ENCODE measurements at regions of chr17 and their contacts with region 1.

Region 1: GRCh38 chr17:77957857-77958715 is at the start of gene TNRC6C:
- DNase-seq: peak; percentile 100
- H3K4me3 ChIP-seq: peak within 1 kb of the TSS; percentile 93
- H3K4me3 Mint-ChIP-seq: peak within 1 kb of the TSS; percentile 97
- H3K27ac Mint-ChIP-seq: peak within 1 kb of the TSS; percentile 85
- H3K4me1 ChIP-seq: peaks cover 3% of the 10 kb centered on the region
- H3K4me1 Mint-ChIP-seq: peaks cover 6% of the 10 kb centered on the region
- H3K27me3 ChIP-seq: no peaks in the 10 kb centered on the region
- H3K27me3 Mint-ChIP-seq: peaks cover 31% of the 10 kb centered on the region
- CTCF ChIP-seq: peak in 1 of 2 experiments; percentile 47
- total RNA-seq, gene TNRC6C: 17.9 and 19.5 TPM in 2 replicates

Region 2: GRCh38 chr17:77783991-77784820 is 173.9 kb before region 1 on chr17:
- CTCF ChIA-PET with region 1: interaction called, 5 read pairs
- POLR2A ChIA-PET with region 1: interaction called, 11 read pairs
- intact Hi-C with region 1: no loop called
- DNase-seq: no peak
- H3K4me3 ChIP-seq: no peak overlapping the region
- H3K4me3 Mint-ChIP-seq: no peak overlapping the region
- H3K27ac Mint-ChIP-seq: no peak overlapping the region
- H3K4me1 ChIP-seq: no peaks in the 10 kb centered on the region
- H3K4me1 Mint-ChIP-seq: no peaks in the 10 kb centered on the region
- H3K27me3 ChIP-seq: no peaks in the 10 kb centered on the region; the same call in none of the 2 replicates
- H3K27me3 Mint-ChIP-seq: peaks cover 37% of the 10 kb centered on the region
- CTCF ChIP-seq: no peak

Region 3: DNA sequence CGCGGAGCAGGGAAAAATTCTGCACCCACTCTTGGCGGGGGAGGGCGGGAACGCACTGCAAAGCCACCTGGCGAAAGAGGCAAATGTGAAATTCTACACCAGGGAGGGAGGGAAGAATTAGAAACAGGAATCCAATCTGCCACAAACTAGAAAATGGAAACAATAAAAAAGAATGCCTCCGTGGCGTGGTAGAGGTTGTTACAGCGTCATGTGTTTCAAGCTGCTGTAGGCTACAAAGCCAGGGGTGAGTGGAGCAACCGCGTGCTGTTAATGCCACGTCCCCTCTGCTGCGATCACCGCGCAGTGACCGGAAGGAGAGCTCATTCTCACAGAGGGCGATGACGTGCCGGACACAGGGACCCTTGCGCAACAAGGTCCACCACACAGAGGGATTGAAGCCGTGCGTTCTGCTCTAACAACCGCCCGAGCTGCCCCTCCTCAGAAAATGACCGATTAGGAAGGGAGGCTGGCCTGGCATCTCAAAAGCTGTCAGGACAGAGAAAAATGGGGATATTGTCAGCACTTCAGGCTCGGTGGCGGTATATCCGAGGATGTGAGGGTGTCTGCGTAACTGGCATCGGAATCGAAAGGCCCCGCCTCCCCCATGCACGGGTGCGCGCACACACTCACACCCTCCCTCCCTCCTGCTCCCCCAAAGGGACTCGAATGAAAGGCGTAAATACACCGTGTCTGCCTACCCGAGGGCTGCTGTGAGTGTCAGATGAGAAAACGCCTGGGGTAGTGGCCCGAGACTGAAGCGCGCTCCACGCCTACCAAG is 70.4 kb before region 1 on chr17:
- CTCF ChIA-PET with region 1: no interaction called
- POLR2A ChIA-PET with region 1: interaction called, 19 read pairs
- intact Hi-C with region 1: no loop called
- DNase-seq: peak; percentile 66 to 69
- H3K4me3 ChIP-seq: peak overlapping the region; percentile 38
- H3K4me3 Mint-ChIP-seq: peak overlapping the region; percentile 78
- H3K27ac Mint-ChIP-seq: peak overlapping the region; percentile 16
- H3K4me1 ChIP-seq: peaks cover 14% of the 10 kb centered on the region; the same call in 1 of the 2 replicates
- H3K4me1 Mint-ChIP-seq: peaks cover 21% of the 10 kb centered on the region
- H3K27me3 ChIP-seq: peaks cover 4% of the 10 kb centered on the region
- H3K27me3 Mint-ChIP-seq: peaks cover 37% of the 10 kb centered on the region
- CTCF ChIP-seq: no peak

Region 4: GRCh38 chr17:78013683-78014467 is 55.8 kb after region 1 on chr17:
- CTCF ChIA-PET with region 1: interaction called, 9 read pairs
- POLR2A ChIA-PET with region 1: interaction called, 13 read pairs
- intact Hi-C with region 1: no loop called
- DNase-seq: peak; percentile 46 to 59
- H3K4me3 ChIP-seq: no peak overlapping the region
- H3K4me3 Mint-ChIP-seq: no peak overlapping the region
- H3K27ac Mint-ChIP-seq: no peak overlapping the region
- H3K4me1 ChIP-seq: no peaks in the 10 kb centered on the region
- H3K4me1 Mint-ChIP-seq: no peaks in the 10 kb centered on the region
- H3K27me3 ChIP-seq: no peaks in the 10 kb centered on the region
- H3K27me3 Mint-ChIP-seq: no peaks in the 10 kb centered on the region
- CTCF ChIP-seq: peak; percentile 62 to 79

Region 5: GRCh38 chr17:78026381-78026780 is 68.3 kb after region 1 on chr17:
- CTCF ChIA-PET with region 1: no interaction called
- POLR2A ChIA-PET with region 1: no interaction called
- intact Hi-C with region 1: no loop called
- DNase-seq: no peak
- H3K4me3 ChIP-seq: no peak overlapping the region
- H3K4me3 Mint-ChIP-seq: no peak overlapping the region
- H3K27ac Mint-ChIP-seq: no peak overlapping the region
- H3K4me1 ChIP-seq: no peaks in the 10 kb centered on the region
- H3K4me1 Mint-ChIP-seq: no peaks in the 10 kb centered on the region
- H3K27me3 ChIP-seq: no peaks in the 10 kb centered on the region
- H3K27me3 Mint-ChIP-seq: no peaks in the 10 kb centered on the region
- CTCF ChIP-seq: no peak

Region 6: GRCh38 chr17:78040440-78041385 is 82.6 kb after region 1 on chr17:
- CTCF ChIA-PET with region 1: no interaction called
- POLR2A ChIA-PET with region 1: interaction called, 20 read pairs
- intact Hi-C with region 1: no loop called
- DNase-seq: peak; percentile 76 to 77
- H3K4me3 ChIP-seq: peak overlapping the region; percentile 52
- H3K4me3 Mint-ChIP-seq: peak overlapping the region; percentile 83
- H3K27ac Mint-ChIP-seq: peak overlapping the region; percentile 90
- H3K4me1 ChIP-seq: peaks cover 9% of the 10 kb centered on the region
- H3K4me1 Mint-ChIP-seq: peaks cover 5% of the 10 kb centered on the region
- H3K27me3 ChIP-seq: no peaks in the 10 kb centered on the region
- H3K27me3 Mint-ChIP-seq: no peaks in the 10 kb centered on the region
- CTCF ChIP-seq: peak; percentile 16 to 30

Measured in Caco-2 (cell line).